ENCODE measurements at regions of chrX and their contacts with region 1.

Region 1: DNA sequence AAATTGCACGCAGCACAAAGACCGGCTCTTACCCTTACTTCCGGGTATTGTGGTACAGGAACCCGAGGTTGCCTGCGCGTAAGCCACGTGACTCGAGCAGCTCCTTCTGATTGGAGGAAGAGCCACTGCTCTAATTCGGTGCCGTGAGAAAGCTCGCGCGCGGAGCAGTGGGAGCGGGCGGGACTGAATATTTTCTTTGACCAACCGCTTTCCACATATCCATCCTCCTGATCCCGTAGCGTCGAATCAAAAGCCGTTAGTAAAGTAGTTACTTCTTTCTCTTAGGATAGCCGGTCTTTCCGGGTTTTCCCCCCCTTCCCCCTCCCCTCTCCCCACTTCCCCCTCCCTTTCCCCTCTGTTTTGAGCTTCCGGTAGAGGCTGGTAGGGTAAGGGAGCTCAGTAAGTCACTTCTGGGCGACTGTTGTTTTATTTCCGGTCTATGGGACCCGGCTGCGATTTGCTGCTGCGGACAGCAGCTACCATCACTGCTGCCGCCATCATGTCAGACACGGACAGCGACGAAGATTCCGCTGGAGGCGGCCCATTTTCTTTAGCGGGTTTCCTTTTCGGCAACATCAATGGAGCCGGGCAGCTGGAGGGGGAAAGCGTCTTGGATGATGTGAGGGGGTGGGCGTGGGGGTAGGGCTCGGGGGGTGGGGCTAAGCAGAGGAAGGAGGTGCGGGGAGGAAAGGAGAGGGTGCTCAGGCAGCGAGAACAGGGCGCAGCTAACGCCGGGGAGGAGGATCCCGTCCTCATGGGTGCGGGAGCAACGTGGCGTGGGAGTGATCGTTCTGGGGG is at the start of gene TAF1:
- DNase-seq: peak; percentile 96
- ATAC-seq: peak; percentile 93
- H3K4me3 ChIP-seq: peak within 1 kb of the TSS; percentile 86
- H3K27ac ChIP-seq: peak within 1 kb of the TSS; percentile 95
- H3K4me1 ChIP-seq: peaks cover 11% of the 10 kb centered on the region
- H3K27me3 ChIP-seq: no peaks in the 10 kb centered on the region
- CTCF ChIP-seq: no peak
- total RNA-seq, gene TAF1: 36.8 and 45.2 TPM in 2 replicates

Region 2: DNA sequence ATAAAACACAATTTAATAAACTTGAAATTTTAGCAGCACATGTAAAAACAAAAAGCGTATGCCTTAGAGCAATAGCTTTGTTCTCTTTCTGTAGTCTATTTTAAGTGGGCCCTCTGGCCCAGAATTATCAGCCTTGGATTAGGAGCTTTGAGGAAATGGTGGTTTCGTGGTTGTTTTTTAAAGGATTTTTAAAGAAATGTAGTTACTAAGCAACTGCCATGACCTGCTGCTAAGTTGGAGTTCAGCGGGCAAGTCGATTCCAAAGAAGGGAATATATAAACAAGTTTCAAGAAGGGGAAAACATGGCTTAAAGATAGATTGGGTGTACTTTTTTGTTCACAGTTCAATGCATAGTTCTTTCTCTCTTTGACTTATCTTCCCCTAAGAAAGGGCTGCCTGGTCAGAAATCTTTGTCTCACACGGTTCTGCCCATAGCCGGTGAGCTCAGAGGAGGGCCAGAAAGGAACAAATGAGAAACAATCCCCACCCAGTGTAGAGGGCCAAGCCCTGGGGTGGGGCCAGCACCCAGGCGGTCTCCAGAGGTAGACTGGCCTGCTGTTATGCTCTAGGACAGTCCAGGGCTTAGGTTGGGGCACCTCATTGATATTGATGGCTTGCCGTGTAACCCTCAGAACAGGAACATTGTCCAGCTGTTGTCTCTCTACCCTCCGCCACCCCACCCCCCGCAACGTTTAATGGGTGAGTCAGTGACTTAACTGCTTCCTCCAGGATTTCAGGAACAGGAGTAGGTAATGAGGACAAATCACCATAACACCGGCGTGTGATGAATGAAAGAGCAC is 888.9 kb before region 1 on chrX:
- CTCF ChIA-PET with region 1: no interaction called
- POLR2A ChIA-PET with region 1: interaction called, 17 read pairs
- intact Hi-C with region 1: no loop called
- DNase-seq: peak; percentile 79
- ATAC-seq: peak; percentile 68
- H3K4me3 ChIP-seq: peak overlapping the region; percentile 43
- H3K27ac ChIP-seq: peak overlapping the region; percentile 99
- H3K4me1 ChIP-seq: peaks cover 60% of the 10 kb centered on the region
- H3K27me3 ChIP-seq: no peaks in the 10 kb centered on the region
- CTCF ChIP-seq: no peak

Region 3: GRCh38 chrX:71254092-71254941 is 111.8 kb before region 1 on chrX and contains the start of gene ZMYM3:
- CTCF ChIA-PET with region 1: interaction called, 10 read pairs
- POLR2A ChIA-PET with region 1: interaction called, 8 read pairs
- intact Hi-C with region 1: loop called (anchors 1 kb)
- DNase-seq: peak; percentile 85
- ATAC-seq: peak; percentile 85
- H3K4me3 ChIP-seq: peak within 1 kb of the TSS; percentile 99
- H3K27ac ChIP-seq: no peak within 1 kb of the TSS
- H3K4me1 ChIP-seq: peaks cover 17% of the 10 kb centered on the region
- H3K27me3 ChIP-seq: no peaks in the 10 kb centered on the region
- CTCF ChIP-seq: no peak
- total RNA-seq, gene ZMYM3: 23.5 and 25.2 TPM in 2 replicates

Region 4: GRCh38 chrX:71283403-71284143 is 82.5 kb before region 1 on chrX and contains the start of gene NONO:
- CTCF ChIA-PET with region 1: interaction called, 3 read pairs
- POLR2A ChIA-PET with region 1: interaction called, 17 read pairs
- intact Hi-C with region 1: loop called (anchors 2 kb)
- DNase-seq: peak; percentile 99
- ATAC-seq: peak; percentile 85
- H3K4me3 ChIP-seq: peak within 1 kb of the TSS; percentile 94
- H3K27ac ChIP-seq: peak within 1 kb of the TSS; percentile 74
- H3K4me1 ChIP-seq: peaks cover 7% of the 10 kb centered on the region
- H3K27me3 ChIP-seq: no peaks in the 10 kb centered on the region
- CTCF ChIP-seq: peak; percentile 17; the same call in 1 of the 2 replicates
- total RNA-seq, gene NONO: 514 and 631 TPM in 2 replicates

Region 5: DNA sequence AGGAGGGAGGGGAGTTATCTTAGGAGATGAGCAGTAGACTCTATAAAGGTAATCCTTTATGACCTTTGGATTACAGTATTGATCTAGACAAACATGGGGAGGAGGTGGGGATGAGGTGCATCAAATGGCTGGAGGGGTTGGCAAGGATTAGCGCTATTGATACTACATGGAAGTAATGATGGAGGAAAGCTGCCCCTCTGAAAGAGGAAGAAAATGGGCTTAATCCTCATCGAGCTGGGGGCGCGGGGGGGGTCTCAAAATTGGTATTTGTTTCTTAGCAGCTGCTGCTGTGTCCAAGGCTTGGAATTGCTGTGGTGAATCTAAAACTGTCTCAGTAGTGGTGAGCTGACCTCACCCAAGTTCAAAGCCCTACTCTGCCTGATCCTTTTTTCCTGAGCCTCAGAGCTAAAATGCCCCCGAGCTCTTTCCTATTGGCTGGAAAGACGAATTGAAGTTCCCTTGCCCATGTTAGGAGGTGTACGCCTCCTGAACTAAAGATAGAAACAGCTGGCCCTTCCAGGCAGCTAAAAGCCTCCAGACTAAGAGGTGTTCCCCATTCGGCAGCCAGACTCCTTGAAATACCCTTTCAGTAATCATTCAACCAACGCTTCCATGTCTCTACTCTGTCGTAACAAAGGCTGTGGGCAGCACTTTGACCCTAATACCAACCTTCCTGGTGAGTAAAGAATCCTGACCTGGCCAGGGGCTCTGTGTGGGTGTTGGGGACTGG is 64.7 kb before region 1 on chrX and contains the start of gene ITGB1BP2:
- CTCF ChIA-PET with region 1: no interaction called
- POLR2A ChIA-PET with region 1: no interaction called
- intact Hi-C with region 1: no loop called
- DNase-seq: no peak
- ATAC-seq: peak; percentile 16; the same call in 1 of the 2 replicates
- H3K4me3 ChIP-seq: no peak within 1 kb of the TSS
- H3K27ac ChIP-seq: no peak within 1 kb of the TSS
- H3K4me1 ChIP-seq: 0 out of 2 replicates have a peak, but pooled peaks cover 2% of the 10 kb centered on the region
- H3K27me3 ChIP-seq: no peaks in the 10 kb centered on the region
- CTCF ChIP-seq: no peak
- total RNA-seq, gene ITGB1BP2: 0.75 and 1.7 TPM in 2 replicates

Region 6: DNA sequence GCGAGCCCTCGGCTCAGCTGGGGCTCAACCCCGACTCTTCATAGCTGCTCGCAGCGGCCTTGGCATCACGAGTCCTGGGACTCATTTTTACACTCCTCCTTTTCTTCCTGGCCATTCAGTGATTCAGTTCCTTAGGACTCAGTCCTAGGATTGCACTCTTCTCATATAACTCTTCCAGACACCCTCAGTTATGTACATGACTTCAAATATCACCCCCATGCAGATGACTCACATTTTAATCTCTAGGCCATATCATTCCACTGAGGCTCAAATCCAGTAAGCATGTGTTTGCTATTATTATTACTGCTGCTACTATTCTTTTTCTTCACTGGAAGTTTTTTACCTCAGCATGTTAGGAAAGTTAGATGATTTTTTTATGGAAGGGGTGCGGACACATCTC is 50.2 kb before region 1 on chrX:
- CTCF ChIA-PET with region 1: no interaction called
- POLR2A ChIA-PET with region 1: no interaction called
- intact Hi-C with region 1: no loop called
- DNase-seq: no peak
- ATAC-seq: no peak
- H3K4me3 ChIP-seq: no peak overlapping the region
- H3K27ac ChIP-seq: no peak overlapping the region
- H3K4me1 ChIP-seq: no peaks in the 10 kb centered on the region
- H3K27me3 ChIP-seq: no peaks in the 10 kb centered on the region
- CTCF ChIP-seq: no peak

Region 7: GRCh38 chrX:71466979-71467523 is 101.0 kb after region 1 on chrX:
- CTCF ChIA-PET with region 1: no interaction called
- POLR2A ChIA-PET with region 1: no interaction called
- intact Hi-C with region 1: no loop called
- DNase-seq: no peak
- ATAC-seq: no peak
- H3K4me3 ChIP-seq: no peak overlapping the region
- H3K27ac ChIP-seq: no peak overlapping the region
- H3K4me1 ChIP-seq: no peaks in the 10 kb centered on the region
- H3K27me3 ChIP-seq: no peaks in the 10 kb centered on the region
- CTCF ChIP-seq: no peak

Region 8: GRCh38 chrX:71917621-71918343 is 551.7 kb after region 1 on chrX:
- CTCF ChIA-PET with region 1: no interaction called
- POLR2A ChIA-PET with region 1: interaction called, 13 read pairs
- intact Hi-C with region 1: no loop called
- DNase-seq: peak; percentile 52
- ATAC-seq: peak; percentile 57; the same call in 1 of the 2 replicates
- H3K4me3 ChIP-seq: no peak overlapping the region
- H3K27ac ChIP-seq: peak overlapping the region; percentile 41
- H3K4me1 ChIP-seq: peaks cover 10% of the 10 kb centered on the region
- H3K27me3 ChIP-seq: 0 out of 2 replicates have a peak, but pooled peaks cover 3% of the 10 kb centered on the region
- CTCF ChIP-seq: no peak